GM12878 (cell line): ENCODE measurements at regions of chr18 and their contacts with region 1.

Region 1: DNA sequence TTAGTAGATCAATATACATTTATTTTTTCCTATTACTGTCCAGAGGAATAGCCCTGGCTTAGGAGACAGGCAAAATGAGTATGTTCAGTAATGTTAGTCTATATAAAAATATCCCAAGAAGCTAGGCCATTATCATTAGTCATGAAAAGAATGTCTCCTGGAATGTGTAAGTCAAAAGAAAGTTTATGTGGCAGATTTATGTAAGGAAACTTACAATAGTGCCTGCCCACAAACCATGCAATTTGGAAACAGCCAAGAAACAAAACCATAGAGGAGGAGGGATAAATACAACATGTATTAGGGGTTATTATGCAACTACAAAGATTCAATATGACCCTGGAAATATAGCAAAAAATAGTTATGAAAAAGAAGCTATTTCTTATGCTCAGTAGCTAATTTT is 96.3 kb downstream of the NOL4 start:
- DNase-seq: no peak
- ATAC-seq: no peak
- H3K4me3 ChIP-seq: no peak overlapping the region
- H3K27ac ChIP-seq: no peak overlapping the region
- H3K4me1 ChIP-seq: no peaks in the 10 kb centered on the region
- H3K27me3 ChIP-seq: no peaks in the 10 kb centered on the region
- CTCF ChIP-seq: no peak
- EP300 ChIP-seq: no peak
- POLR2A ChIP-seq: no peak
- RAD21 ChIP-seq: no peak

Region 2: DNA sequence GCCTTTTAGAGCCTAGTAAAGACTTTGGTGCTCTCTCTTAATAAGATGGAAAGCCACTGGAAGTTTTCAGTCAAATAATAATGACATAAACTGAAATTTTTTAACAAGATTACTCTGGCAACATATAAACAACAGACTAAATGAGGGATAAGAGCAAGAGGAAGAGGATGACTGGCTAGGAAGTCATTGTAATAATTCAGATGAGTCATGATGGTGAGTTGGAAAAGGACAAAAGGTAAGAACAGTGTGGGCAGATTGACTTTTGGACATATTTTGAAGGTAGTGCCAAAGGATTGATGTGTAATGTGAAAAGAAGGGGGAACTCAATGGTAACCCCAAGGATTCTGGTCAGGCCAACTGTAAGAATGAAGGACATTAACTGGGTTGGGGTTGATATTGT is 214.0 kb before region 1 on chr18:
- CTCF ChIA-PET with region 1: no interaction called
- POLR2A ChIA-PET with region 1: no interaction called
- RAD21 ChIA-PET with region 1: no interaction called
- SMC1A ChIA-PET with region 1: no interaction called
- in situ Hi-C with region 1: no loop called
- intact Hi-C with region 1: no loop called
- DNase-seq: no peak
- ATAC-seq: no peak
- H3K4me3 ChIP-seq: no peak overlapping the region
- H3K27ac ChIP-seq: no peak overlapping the region
- H3K4me1 ChIP-seq: no peaks in the 10 kb centered on the region
- H3K27me3 ChIP-seq: no peaks in the 10 kb centered on the region
- CTCF ChIP-seq: no peak
- EP300 ChIP-seq: no peak
- POLR2A ChIP-seq: no peak
- RAD21 ChIP-seq: no peak

Region 3: DNA sequence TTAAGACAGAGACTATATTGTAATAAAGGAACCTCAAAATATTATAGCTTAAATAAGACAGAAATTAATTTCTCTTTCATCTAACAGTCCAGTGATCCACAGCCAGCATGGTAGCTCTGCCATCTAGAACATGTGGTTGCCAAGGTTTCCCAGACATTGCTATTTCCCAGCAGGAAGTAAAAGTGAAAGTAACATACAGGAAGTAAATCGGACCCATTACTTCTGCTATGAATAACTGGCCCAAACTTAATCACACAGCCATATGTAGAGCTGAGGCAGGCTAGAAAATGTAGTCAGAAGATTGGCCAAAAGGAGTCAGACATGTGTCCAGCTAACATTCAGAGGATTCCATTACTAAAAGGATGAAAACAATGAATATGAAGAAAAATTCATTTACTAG is 25.3 kb after region 1 on chr18:
- CTCF ChIA-PET with region 1: interaction called, 43 read pairs
- POLR2A ChIA-PET with region 1: interaction called, 6 read pairs
- RAD21 ChIA-PET with region 1: interaction called, 30 read pairs
- SMC1A ChIA-PET with region 1: interaction called, 18 read pairs
- in situ Hi-C with region 1: no loop called
- intact Hi-C with region 1: no loop called
- DNase-seq: peak; percentile 13
- ATAC-seq: peak; percentile 85
- H3K4me3 ChIP-seq: no peak overlapping the region
- H3K27ac ChIP-seq: no peak overlapping the region
- H3K4me1 ChIP-seq: no peaks in the 10 kb centered on the region
- H3K27me3 ChIP-seq: no peaks in the 10 kb centered on the region
- CTCF ChIP-seq: no peak
- EP300 ChIP-seq: 0 out of 4 replicates have a peak, but pooled peaks of 1 of the 2 experiments have one; percentile 12
- POLR2A ChIP-seq: no peak
- RAD21 ChIP-seq: no peak

Region 4: GRCh38 chr18:34189656-34190435 is 61.4 kb after region 1 on chr18:
- CTCF ChIA-PET with region 1: interaction called, 9 read pairs
- POLR2A ChIA-PET with region 1: interaction called, 10 read pairs
- RAD21 ChIA-PET with region 1: no interaction called
- SMC1A ChIA-PET with region 1: interaction called, 5 read pairs
- in situ Hi-C with region 1: no loop called
- intact Hi-C with region 1: no loop called
- DNase-seq: no peak
- ATAC-seq: no peak
- H3K4me3 ChIP-seq: no peak overlapping the region
- H3K27ac ChIP-seq: no peak overlapping the region
- H3K4me1 ChIP-seq: no peaks in the 10 kb centered on the region
- H3K27me3 ChIP-seq: no peaks in the 10 kb centered on the region
- CTCF ChIP-seq: no peak
- EP300 ChIP-seq: no peak
- POLR2A ChIP-seq: no peak
- RAD21 ChIP-seq: no peak